GM13976 (cell line): ENCODE measurements at regions of chr3 and their contacts with region 1.

Region 1: DNA sequence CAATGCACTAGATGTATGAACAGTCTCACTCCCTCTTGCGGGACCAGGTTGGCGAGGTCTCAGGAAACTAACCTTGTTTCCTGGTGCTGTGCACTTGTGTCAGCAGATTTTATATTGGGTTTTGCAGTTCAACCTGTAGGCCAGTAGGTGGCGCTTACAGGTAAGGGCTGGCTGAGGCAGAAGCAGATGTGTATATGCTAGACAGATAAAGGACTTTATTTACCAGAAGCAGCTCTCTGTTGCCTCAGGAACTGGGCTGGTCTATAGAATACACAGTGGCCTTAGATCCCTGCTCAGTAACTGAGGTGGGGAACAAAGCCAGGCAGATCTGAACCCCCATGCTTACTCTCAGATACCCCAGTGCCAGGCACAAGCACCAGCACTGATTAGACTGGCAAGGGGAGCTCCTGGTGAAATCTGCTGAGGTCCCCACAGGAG is 296.8 kb downstream of the DOCK3 start:
- DNase-seq: peak; percentile 67
- CTCF ChIP-seq: peak; percentile 87

Region 2: DNA sequence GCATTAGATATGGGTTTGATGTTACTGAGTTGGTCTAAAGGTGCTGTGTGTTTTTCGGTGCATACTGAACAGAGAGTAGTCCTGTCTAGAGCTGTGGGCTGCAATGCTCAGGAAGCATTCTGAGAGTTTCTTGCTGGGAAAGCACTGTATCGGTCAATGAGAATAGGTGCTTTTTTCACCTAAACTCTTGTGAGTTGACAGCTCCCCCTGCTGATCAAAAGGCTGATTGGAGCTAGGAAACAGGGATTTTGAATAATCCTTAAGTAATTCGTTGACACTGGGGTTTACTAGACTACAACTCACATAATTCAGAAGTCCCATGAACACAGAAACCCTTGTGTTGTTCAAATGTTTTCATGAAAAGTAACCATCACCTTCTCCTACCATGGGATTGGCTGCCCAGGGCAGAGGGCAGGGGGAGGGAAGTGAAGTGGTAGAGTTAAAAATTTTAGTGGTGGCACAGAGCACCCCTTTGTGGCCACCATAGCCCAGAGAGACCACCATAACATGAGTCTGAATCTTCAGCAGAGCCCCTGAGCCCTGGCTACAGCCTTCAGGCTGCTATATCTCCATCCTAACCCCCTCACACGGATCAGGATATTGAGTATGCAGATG is 400.5 kb after region 1 on chr3:
- in situ Hi-C with region 1: loop called (anchors 25 kb)
- DNase-seq: peak; percentile 54
- CTCF ChIP-seq: peak; percentile 52

Region 3: DNA sequence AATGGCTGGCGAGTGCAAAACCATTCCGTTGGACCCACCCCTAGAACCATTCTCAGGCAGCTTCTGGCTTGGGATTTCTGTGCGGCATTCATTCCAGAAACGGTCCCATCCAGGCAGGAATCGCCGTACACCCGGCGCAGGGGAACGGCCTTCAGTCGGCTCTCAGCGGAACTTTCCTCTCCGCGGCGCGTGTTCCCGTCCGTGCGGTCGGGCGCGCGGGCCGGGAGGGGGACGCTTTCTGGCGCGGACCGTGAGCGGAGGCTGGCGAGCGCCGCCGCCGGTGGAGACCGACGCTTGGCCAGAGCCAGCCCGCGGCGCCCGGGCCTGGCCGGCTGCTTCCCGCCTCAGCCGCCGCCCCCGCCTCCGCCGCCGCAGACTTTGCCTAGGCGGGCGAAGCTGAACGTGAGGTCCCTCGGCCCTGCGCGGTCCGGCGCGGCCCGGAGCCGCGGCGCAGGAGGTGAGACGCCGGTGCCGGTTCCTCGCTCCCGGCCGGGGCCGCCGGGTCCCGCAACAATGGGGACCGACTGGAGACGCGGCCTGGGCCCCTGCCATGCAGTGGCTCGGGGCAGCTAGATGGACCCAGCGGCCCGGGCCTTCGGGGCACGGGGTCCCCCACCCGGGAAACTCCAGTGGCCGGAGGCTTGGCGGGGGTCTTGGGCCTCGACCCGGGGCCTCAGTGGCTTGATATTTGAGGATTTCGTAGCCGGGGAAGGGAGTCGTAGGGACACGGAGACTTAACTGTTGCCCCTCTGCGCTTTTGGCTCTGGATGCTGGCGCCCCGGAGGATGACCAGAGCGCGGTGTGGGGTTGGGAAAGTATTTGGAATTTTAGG is 567.2 kb after region 1 on chr3 and contains the start of gene RAD54L2:
- in situ Hi-C with region 1: no loop called
- DNase-seq: peak; percentile 93
- CTCF ChIP-seq: peak; percentile 23